Common myeloid progenitor, CD34-positive (primary cell): ENCODE measurements at regions of chr5 and their contacts with region 1.

Region 1: GRCh38 chr5:176543428-176544173 is 5.5 kb upstream of the CDHR2 start:
- DNase-seq: peak; percentile 55 to 78 (median 74)
- H3K4me3 ChIP-seq: peak overlapping the region; percentile 58 to 89 (median 77)
- H3K27ac ChIP-seq: peak overlapping the region in 1 of 2 experiments; percentile 76
- H3K4me1 ChIP-seq: peaks cover 13 to 64% (median 48%) of the 10 kb centered on the region in 4 experiments
- H3K27me3 ChIP-seq: no peaks in the 10 kb centered on the region

Region 2: GRCh38 chr5:175383350-175383749 is 1160.3 kb before region 1 on chr5:
- CTCF ChIA-PET with region 1: no interaction called
- POLR2A ChIA-PET with region 1: no interaction called
- DNase-seq: no peak
- H3K4me3 ChIP-seq: no peak overlapping the region
- H3K27ac ChIP-seq: no peak overlapping the region
- H3K4me1 ChIP-seq: no peaks in the 10 kb centered on the region
- H3K27me3 ChIP-seq: peaks cover 0 to 3% (median 2%) of the 10 kb centered on the region in 5 experiments

Region 3: GRCh38 chr5:176415952-176416924 is 127.4 kb before region 1 on chr5 and contains the start of gene CLTB:
- CTCF ChIA-PET with region 1: interaction called, 13 read pairs
- POLR2A ChIA-PET with region 1: no interaction called
- DNase-seq: peak; percentile 87 to 93 (median 93)
- H3K4me3 ChIP-seq: peak within 1 kb of the TSS; percentile 46 to 85 (median 75)
- H3K27ac ChIP-seq: peak within 1 kb of the TSS in 1 of 2 experiments; percentile 65
- H3K4me1 ChIP-seq: peaks cover 2 to 15% (median 14%) of the 10 kb centered on the region in 4 experiments
- H3K27me3 ChIP-seq: no peaks in the 10 kb centered on the region

Region 4: GRCh38 chr5:176429972-176430371 is 113.6 kb before region 1 on chr5:
- CTCF ChIA-PET with region 1: no interaction called
- POLR2A ChIA-PET with region 1: no interaction called
- DNase-seq: no peak
- H3K4me3 ChIP-seq: no peak overlapping the region
- H3K27ac ChIP-seq: no peak overlapping the region
- H3K4me1 ChIP-seq: peaks cover 0 to 11% (median 4%) of the 10 kb centered on the region in 4 experiments
- H3K27me3 ChIP-seq: no peaks in the 10 kb centered on the region

Region 5: DNA sequence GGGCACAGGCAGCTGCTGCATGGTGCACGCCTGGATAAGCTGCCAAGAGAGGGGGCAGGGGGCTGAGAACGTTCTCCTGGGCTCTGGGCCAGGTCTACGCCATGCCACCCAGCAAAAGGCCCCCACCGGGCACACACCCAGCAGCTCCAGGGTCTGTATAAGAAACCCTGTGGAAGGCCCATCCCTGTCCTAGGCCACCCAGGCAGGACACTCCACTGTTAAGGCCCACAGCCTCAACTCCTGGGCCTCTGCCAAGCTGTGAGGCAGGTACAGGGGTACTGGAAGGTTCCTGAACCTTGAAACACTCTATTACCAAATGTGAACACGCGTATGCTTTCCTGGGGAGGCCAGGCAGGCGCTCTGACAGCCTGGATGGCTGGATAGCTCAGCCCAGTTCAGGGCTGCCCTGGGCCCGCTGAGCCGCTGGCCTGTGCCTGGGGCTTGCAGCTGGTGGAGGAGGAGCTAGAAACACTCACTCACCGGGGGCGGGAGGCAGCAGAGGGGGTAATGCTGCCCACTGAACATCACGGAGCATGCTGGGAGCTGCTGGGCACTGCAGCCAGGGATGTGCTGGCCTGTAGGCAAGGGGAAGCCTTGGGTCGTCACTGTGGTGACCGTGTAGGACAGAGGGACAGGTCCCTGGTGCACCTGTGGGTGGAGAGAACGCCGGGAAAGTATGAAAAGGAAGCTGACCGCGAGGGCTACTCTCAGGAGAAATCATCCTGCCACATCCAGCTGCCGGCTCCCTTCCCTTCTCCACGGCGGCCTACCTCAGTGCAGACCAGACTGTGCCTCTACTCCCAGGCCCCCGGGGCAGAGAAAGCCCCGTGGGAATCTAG is 12.4 kb before region 1 on chr5:
- CTCF ChIA-PET with region 1: interaction called, 29 read pairs
- POLR2A ChIA-PET with region 1: interaction called, 11 read pairs
- DNase-seq: peak in 2 of 3 donors; percentile 45 to 59
- H3K4me3 ChIP-seq: peak overlapping the region in 4 of 7 experiments; percentile 1 to 28 (median 14)
- H3K27ac ChIP-seq: no peak overlapping the region
- H3K4me1 ChIP-seq: peaks cover 10 to 80% (median 72%) of the 10 kb centered on the region in 4 experiments
- H3K27me3 ChIP-seq: no peaks in the 10 kb centered on the region

Region 6: DNA sequence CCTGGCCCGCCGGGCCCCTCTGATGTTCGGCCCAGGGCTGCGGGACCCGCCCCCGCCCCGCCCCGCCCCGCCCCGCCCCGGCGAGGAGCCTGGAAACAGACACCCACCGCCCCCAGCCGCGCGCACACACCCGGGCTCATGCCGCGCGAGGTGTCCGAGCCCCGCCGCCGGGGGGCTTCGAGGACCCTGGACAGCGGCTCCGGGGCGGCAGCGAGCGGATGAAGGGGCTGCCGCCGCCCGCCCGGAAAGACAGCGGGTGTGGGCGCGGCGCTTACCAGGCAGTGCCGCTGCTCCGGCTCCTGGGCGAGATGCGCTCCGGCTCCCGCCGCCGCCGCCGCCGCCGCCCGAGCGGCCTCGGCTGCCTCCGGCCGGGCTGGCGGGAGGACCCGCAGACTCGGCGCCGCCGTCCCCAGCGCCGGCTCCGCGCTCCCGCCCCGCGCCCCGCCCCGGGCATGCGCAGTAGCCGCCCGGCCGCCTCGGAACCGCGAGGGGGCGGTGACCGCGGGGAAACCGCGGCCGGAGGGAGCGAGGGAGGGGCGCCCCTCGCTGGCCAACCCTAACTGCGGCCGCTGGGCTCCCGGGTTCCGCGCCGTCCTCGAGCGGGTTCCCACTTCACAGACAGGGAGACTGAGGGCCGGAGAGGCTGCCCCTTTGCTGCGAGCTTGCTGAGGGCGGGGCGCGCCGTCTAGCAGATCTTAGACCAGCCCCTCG is 66.3 kb after region 1 on chr5 and contains the start of gene GPRIN1:
- CTCF ChIA-PET with region 1: no interaction called
- POLR2A ChIA-PET with region 1: no interaction called
- DNase-seq: peak; percentile 29 to 71 (median 67)
- H3K4me3 ChIP-seq: peak within 1 kb of the TSS; percentile 19 to 63 (median 33)
- H3K27ac ChIP-seq: no peak within 1 kb of the TSS
- H3K4me1 ChIP-seq: peaks cover 0 to 10% (median 5%) of the 10 kb centered on the region in 4 experiments
- H3K27me3 ChIP-seq: peaks cover 0 to 53% (median 23%) of the 10 kb centered on the region in 5 experiments